Activated CD8-positive, alpha-beta T cell treated with anti-CD3 and anti-CD28 coated beads, Interleukin-2, amount 10 ng/mL, durations not matched to agents 7 days and 5 days (primary cell): ENCODE measurements at regions of chr16 and their contacts with region 1.

Region 1: DNA sequence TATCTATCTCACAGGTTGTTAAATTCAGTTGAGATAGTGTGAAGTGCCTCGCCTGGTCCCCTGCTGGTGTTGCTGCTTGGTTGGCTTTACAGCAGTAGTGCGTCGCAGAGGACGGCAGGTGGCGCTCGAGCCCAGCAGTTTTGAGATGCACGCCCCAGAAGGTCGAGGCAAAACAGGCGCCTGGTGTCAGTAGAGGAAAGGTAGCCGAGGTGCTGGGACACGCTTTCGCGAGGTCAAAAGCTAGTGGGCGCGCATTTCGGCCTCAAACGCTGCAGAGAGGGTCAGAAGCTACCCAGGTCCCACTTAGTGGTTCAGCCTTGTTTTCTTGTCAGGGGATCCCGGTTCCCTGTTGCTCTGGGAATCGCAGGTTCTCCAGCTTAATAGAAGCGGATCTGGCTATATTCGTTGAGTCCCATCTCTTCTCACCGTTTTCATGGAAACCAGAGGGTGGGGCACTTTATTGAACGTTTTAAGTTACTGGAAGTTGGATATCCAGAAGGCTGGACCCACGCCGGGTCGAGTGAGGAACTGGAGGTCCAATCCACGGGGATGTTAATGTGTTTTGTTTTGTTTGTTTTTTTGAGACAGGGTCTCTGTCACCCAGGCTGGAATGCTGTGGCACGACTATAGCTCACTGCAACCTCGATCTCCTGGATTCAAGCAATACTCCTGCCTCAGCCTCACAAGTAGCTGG is 10.3 kb upstream of the ZFP90 start:
- DNase-seq: peak; percentile 93
- ATAC-seq: peak; percentile 80
- H3K4me3 Mint-ChIP-seq: peak overlapping the region; percentile 82
- H3K27ac Mint-ChIP-seq: no peak overlapping the region
- H3K4me1 Mint-ChIP-seq: peaks cover 21% of the 10 kb centered on the region
- H3K27me3 Mint-ChIP-seq: no peaks in the 10 kb centered on the region

Region 2: DNA sequence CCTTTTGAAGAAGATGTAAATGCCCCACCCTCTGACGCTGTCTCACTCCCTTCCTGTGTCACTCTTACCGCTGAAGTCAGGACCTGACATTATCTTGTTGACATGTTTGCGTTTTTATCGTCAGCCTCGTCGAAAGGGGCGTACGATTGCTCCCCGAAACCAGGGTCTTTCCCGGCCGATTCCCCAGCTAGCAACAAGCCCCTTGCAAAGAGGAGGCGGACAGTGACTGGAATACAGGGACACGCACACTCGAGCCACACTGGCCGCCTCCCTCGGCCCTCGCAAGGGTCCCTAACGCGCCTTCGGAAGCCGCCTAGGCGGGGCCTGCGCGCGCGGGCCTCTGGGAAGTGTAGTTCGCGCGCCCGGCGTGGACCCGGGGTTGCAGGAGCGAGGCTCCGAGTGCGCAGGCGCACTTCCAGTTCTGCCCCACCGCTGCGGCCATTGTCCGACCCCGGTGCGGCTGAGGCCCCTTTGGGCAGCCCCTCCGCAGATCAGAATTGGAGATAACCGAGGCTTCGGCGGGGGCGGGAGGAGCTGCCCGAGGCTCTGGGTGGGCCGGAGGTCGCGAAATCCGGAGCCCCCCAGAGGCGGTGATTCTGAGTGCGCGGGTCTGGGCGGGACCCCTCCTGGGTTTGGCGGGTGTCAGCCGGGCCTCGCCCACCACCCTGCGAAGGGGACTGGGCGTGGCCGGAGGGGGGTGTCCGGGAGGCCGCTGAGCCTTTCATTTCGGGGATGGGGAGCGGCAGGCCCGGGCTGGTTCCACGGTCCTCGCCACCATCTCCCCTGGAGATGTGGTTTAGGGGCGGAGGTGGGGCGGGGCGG is 10.3 kb after region 1 on chr16 and contains the start of gene ZFP90:
- CTCF ChIA-PET with region 1: interaction called, 7 read pairs
- POLR2A ChIA-PET with region 1: interaction called, 14 read pairs
- DNase-seq: peak; percentile 91
- ATAC-seq: peak; percentile 96
- H3K4me3 Mint-ChIP-seq: peak within 1 kb of the TSS; percentile 90
- H3K27ac Mint-ChIP-seq: peak within 1 kb of the TSS; percentile 99
- H3K4me1 Mint-ChIP-seq: peaks cover 19% of the 10 kb centered on the region
- H3K27me3 Mint-ChIP-seq: no peaks in the 10 kb centered on the region
- total RNA-seq, gene ZFP90: 32.1 to 33.6 TPM

Region 3: DNA sequence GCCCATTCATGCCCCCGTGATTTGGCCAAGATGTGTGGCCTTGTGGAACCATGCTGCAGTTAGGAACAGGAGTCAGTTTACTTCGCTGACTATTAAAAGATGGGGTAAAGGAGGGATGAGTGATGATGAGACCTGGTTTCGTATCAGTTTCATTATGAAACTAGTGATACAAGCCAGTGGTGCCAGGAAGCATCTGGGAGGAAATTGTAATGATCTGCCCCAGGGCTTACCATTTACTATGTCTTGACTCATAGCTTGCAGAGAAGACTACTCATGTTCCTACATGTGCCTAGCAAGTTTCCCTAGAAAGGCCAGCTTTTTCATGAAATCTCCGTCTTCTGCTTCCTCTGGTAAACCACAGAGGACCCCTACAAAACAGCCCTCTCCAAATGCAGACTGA is 139.4 kb after region 1 on chr16:
- CTCF ChIA-PET with region 1: interaction called, 10 read pairs
- POLR2A ChIA-PET with region 1: no interaction called
- DNase-seq: peak; percentile 36
- ATAC-seq: peak; percentile 75
- H3K4me3 Mint-ChIP-seq: no peak overlapping the region
- H3K27ac Mint-ChIP-seq: peak overlapping the region; percentile 33
- H3K4me1 Mint-ChIP-seq: peaks cover 16% of the 10 kb centered on the region
- H3K27me3 Mint-ChIP-seq: peaks cover 4% of the 10 kb centered on the region